ENCODE measurements at regions of chr3 and their contacts with region 1.

Region 1: GRCh38 chr3:152471814-152472671 is 203.3 kb downstream of the MBNL1 start:
- DNase-seq: peak in 8 of 10 donors; percentile 33 to 74 (median 55)
- H3K4me3 ChIP-seq: peak overlapping the region in 57 of 59 donors; percentile 1 to 64 (median 38)
- H3K27ac ChIP-seq: peak overlapping the region in 13 of 59 donors; percentile 19 to 59 (median 40)
- H3K27me3 ChIP-seq: no peaks in the 10 kb centered on the region
- CTCF ChIP-seq: peak; percentile 54 to 91 (median 79)

Region 2: GRCh38 chr3:151804267-151804666 is 667.8 kb before region 1 on chr3:
- intact Hi-C with region 1: no loop called
- DNase-seq: no peak
- H3K4me3 ChIP-seq: no peak overlapping the region
- H3K27ac ChIP-seq: no peak overlapping the region
- H3K27me3 ChIP-seq: no peaks in the 10 kb centered on the region
- CTCF ChIP-seq: no peak

Region 3: GRCh38 chr3:152071924-152072323 is 400.1 kb before region 1 on chr3:
- intact Hi-C with region 1: loop called in 1 of 2 experiments (anchors 5 kb)
- DNase-seq: no peak
- H3K4me3 ChIP-seq: no peak overlapping the region
- H3K27ac ChIP-seq: no peak overlapping the region
- H3K27me3 ChIP-seq: no peaks in the 10 kb centered on the region
- CTCF ChIP-seq: peak in 35 of 56 donors; percentile 4 to 59 (median 31)

Measured in dorsolateral prefrontal cortex (tissue), 120 donors.